Gastrocnemius medialis (tissue), 4 donors: ENCODE measurements at regions of chr12 and their contacts with region 1.

Region 1: GRCh38 chr12:95003213-95003920 is at the start of gene NDUFA12:
- DNase-seq: peak; percentile 91 to 93
- ATAC-seq: peak; percentile 98 to 99
- H3K4me3 ChIP-seq: peak within 1 kb of the TSS; percentile 78 to 94 (median 80)
- H3K27ac ChIP-seq: peak within 1 kb of the TSS; percentile 79 to 89 (median 84)
- H3K4me1 ChIP-seq: peaks cover 28 to 30% of the 10 kb centered on the region in 2 donors
- H3K27me3 ChIP-seq: no peaks in the 10 kb centered on the region
- CTCF ChIP-seq: no peak
- POLR2A ChIP-seq: peak; percentile 77 to 81
- total RNA-seq, gene NDUFA12: 225 to 382 (median 356) TPM

Region 2: DNA sequence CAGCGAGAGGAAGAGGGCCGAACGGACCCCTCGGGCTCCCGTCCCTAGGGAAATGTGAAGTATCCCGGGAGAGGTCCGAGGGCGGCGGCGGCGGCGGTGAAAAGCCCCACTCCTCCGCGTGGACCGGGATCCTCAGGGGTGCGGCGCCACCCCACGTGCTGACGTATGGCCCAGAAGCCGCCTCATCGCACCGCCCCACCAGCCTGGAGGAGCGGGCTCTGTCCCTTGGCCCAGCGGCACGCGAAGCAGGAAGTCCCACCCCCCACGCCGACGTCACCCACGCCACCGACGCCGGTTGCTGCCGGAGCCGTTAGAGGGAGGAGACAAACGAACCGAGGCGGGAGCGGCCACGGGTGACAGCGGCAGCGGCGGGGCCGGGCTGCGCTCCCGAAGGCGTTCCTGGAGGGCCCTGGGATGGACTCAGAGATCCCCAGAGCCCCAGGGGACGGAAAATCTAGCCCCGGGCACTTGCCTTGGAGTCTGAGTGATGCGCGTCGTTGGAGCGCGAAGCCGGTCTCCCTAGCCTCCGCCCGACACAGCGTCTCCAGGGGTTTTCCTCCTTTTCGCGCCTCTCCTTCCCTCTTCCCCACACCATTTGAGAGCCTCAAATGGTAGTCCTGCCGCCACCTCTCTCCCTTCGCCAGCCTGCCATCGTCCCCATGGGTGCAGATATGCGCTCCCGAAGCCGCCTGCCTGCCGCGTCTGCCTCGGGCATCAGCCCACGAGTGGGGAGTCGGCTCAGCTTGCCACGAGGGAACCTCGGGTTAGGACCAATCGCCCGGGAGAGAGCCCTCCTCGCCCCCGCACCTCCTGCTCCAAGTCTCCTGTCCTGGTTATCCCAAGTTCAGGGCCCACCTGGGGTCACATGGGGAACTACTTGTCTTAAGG is 543.4 kb before region 1 on chr12 and contains the start of gene CEP83:
- in situ Hi-C with region 1: no loop called
- intact Hi-C with region 1: loop called (anchors 5 kb)
- DNase-seq: peak; percentile 93 to 95
- ATAC-seq: peak; percentile 93 to 94
- H3K4me3 ChIP-seq: peak within 1 kb of the TSS; percentile 80 to 94 (median 86)
- H3K27ac ChIP-seq: peak within 1 kb of the TSS; percentile 91 to 94 (median 93)
- H3K4me1 ChIP-seq: peaks cover 10 to 12% of the 10 kb centered on the region in 2 donors
- H3K27me3 ChIP-seq: no peaks in the 10 kb centered on the region
- CTCF ChIP-seq: no peak
- POLR2A ChIP-seq: peak; percentile 76 to 89
- total RNA-seq, gene CEP83: 3.5 to 19.5 (median 11.2) TPM

Region 3: GRCh38 chr12:94545935-94546771 is 457.2 kb before region 1 on chr12:
- in situ Hi-C with region 1: no loop called
- intact Hi-C with region 1: loop called (anchors 10 kb)
- DNase-seq: peak; percentile 23 to 35
- ATAC-seq: peak; percentile 86 to 96
- H3K4me3 ChIP-seq: no peak overlapping the region
- H3K27ac ChIP-seq: no peak overlapping the region
- H3K4me1 ChIP-seq: no peaks in the 10 kb centered on the region
- H3K27me3 ChIP-seq: no peaks in the 10 kb centered on the region
- CTCF ChIP-seq: peak; percentile 65 to 81 (median 76)
- POLR2A ChIP-seq: no peak

Region 4: DNA sequence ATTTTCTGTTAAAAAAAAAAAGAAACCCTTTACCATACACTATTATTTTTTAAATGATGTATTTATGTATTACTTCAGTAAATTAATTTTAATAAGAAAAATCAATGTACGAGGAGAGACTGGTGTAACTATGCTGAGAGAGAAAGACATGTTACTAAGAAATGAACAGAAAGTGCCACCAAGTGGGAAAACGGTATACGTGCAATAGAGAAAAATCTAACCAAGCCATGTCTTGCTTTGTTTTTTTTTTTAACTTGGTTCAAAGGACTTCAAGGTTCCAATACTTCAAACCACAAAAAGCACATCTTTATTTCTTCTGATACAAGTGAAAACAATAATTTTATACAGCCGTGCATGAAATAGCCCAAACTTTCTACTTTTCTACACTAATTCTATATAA is 22.8 kb before region 1 on chr12:
- in situ Hi-C with region 1: no loop called
- intact Hi-C with region 1: no loop called
- DNase-seq: no peak
- ATAC-seq: no peak
- H3K4me3 ChIP-seq: no peak overlapping the region
- H3K27ac ChIP-seq: peak overlapping the region in 1 of 4 donors; percentile 69
- H3K4me1 ChIP-seq: peaks cover 0 to 14% of the 10 kb centered on the region in 2 donors
- H3K27me3 ChIP-seq: no peaks in the 10 kb centered on the region
- CTCF ChIP-seq: peak in 1 of 5 experiments; percentile 6
- POLR2A ChIP-seq: no peak

Region 5: DNA sequence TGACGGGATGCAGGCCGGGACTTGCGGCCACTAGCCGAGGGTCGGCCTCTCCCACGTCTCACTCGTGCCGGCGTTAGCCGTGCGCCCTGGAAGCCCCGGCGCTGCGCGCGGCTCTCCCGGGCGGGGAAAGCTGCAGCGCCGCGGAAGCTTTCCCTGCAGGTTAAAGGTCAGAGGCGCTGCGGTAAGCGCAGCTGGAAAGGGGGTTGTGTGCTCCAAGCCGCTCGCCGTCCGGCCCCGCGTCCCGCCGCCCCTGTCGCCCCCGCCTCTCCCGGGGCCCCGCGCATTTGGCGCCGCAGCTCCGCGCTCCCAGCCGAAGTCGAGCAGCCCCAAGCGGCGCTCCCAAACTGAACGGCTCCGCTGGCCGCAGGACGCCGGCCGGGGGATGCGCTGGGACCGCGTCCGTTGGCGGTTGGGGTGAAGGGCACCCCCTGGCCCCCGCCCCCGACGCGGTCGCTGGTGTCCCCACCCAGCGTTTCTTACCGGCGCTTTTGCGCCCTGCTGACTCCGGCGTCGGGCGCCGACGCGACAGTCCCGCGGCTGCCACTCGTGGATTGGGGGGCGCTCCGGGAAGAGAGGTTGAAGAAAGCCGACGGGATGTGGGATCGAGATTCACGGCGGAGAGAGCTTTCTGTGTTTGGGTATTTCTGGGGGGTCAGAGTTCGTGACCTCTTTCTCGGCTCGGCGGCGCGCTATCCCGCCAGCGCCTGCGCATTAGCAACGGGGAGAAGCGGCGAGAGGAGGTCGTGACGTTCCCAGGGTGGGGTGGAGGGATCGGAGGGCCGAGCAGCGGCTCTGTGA is 69.7 kb after region 1 on chr12 and contains the start of gene NR2C1:
- in situ Hi-C with region 1: no loop called
- intact Hi-C with region 1: loop called (anchors 5 kb)
- DNase-seq: peak; percentile 84 to 92
- ATAC-seq: peak; percentile 95 to 97
- H3K4me3 ChIP-seq: peak within 1 kb of the TSS; percentile 77 to 95 (median 82)
- H3K27ac ChIP-seq: peak within 1 kb of the TSS; percentile 79 to 91 (median 84)
- H3K4me1 ChIP-seq: peaks cover 9 to 15% of the 10 kb centered on the region in 2 donors
- H3K27me3 ChIP-seq: no peaks in the 10 kb centered on the region
- CTCF ChIP-seq: peak in 1 of 5 experiments; percentile 55
- POLR2A ChIP-seq: peak in 1 of 2 donors; percentile 34
- total RNA-seq, gene NR2C1: 16.2 to 48.8 (median 22.5) TPM